ENCODE measurements at regions of chrX and their contacts with region 1.

Region 1: DNA sequence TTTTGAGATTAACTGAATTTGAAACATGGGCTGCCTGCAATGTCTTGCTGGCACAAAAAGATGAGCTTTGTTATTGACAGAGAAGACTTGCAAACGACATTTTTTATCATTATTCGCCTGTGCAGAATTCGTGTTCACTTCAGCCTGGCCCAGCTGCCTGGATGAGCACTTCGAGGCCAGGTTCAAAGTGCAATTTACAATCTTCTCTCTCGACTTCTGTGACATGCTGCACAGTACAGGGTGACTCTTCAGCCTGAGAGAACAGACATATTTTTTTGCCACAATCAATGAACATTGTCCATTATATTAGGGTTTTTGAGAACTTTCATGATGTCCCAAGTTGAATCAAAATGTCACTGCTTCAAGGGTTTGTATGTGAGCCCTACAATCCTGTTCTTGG is 616.5 kb downstream of the SMARCA1 start:
- DNase-seq: no peak
- H3K4me3 ChIP-seq: no peak overlapping the region
- H3K4me3 Mint-ChIP-seq: no peak overlapping the region
- H3K27ac Mint-ChIP-seq: no peak overlapping the region
- H3K4me1 ChIP-seq: no peaks in the 10 kb centered on the region
- H3K4me1 Mint-ChIP-seq: no peaks in the 10 kb centered on the region
- H3K27me3 ChIP-seq: no peaks in the 10 kb centered on the region
- H3K27me3 Mint-ChIP-seq: peaks cover 3% of the 10 kb centered on the region
- CTCF ChIP-seq: no peak

Region 2: GRCh38 chrX:128961290-128961689 is 54.5 kb after region 1 on chrX:
- CTCF ChIA-PET with region 1: no interaction called
- POLR2A ChIA-PET with region 1: no interaction called
- intact Hi-C with region 1: loop called (anchors 10 kb)
- DNase-seq: no peak
- H3K4me3 ChIP-seq: no peak overlapping the region
- H3K4me3 Mint-ChIP-seq: no peak overlapping the region
- H3K27ac Mint-ChIP-seq: no peak overlapping the region
- H3K4me1 ChIP-seq: no peaks in the 10 kb centered on the region
- H3K4me1 Mint-ChIP-seq: no peaks in the 10 kb centered on the region
- H3K27me3 ChIP-seq: no peaks in the 10 kb centered on the region
- H3K27me3 Mint-ChIP-seq: no peaks in the 10 kb centered on the region
- CTCF ChIP-seq: no peak